Endothelial cell of umbilical vein (primary cell): ENCODE measurements at regions of chr12 and their contacts with region 1.

Region 1: DNA sequence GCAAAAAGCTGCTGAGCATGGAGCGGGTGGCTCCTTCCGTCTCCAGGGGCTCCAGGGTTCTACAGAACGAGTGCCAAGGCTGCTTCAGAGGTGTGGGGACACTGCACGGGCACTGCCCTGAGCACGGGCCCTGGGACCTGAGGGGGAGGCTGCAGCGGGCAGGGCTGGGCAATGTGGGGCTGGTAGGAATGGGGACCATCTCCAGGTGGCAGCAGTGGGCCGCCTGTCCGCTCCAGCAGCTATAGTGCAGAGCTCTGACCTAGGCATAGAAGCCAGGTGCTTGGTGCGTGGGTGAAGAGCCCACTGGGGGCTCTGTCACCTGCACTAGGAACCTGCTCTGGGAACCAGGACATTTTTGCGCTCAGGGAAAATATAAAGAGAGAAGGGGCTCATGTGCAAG is 22.3 kb downstream of the HDAC7 start:
- DNase-seq: no peak
- H3K4me3 ChIP-seq: no peak overlapping the region
- H3K27ac ChIP-seq: no peak overlapping the region
- H3K4me1 ChIP-seq: peaks cover 23% of the 10 kb centered on the region
- H3K27me3 ChIP-seq: no peaks in the 10 kb centered on the region
- CTCF ChIP-seq: peak; percentile 6 to 45
- POLR2A ChIP-seq: no peak

Region 2: GRCh38 chr12:47812797-47813510 is 15.5 kb after region 1 on chr12:
- CTCF ChIA-PET with region 1: interaction called, 35 read pairs
- POLR2A ChIA-PET with region 1: interaction called, 9 read pairs
- dilution Hi-C with region 1: no loop called
- intact Hi-C with region 1: loop called (anchors 1 kb)
- DNase-seq: peak; percentile 87
- H3K4me3 ChIP-seq: peak overlapping the region in 2 of 3 experiments; percentile 11 to 16
- H3K27ac ChIP-seq: peak overlapping the region; percentile 93
- H3K4me1 ChIP-seq: peaks cover 92% of the 10 kb centered on the region
- H3K27me3 ChIP-seq: no peaks in the 10 kb centered on the region
- CTCF ChIP-seq: no peak
- POLR2A ChIP-seq: no peak

Region 3: DNA sequence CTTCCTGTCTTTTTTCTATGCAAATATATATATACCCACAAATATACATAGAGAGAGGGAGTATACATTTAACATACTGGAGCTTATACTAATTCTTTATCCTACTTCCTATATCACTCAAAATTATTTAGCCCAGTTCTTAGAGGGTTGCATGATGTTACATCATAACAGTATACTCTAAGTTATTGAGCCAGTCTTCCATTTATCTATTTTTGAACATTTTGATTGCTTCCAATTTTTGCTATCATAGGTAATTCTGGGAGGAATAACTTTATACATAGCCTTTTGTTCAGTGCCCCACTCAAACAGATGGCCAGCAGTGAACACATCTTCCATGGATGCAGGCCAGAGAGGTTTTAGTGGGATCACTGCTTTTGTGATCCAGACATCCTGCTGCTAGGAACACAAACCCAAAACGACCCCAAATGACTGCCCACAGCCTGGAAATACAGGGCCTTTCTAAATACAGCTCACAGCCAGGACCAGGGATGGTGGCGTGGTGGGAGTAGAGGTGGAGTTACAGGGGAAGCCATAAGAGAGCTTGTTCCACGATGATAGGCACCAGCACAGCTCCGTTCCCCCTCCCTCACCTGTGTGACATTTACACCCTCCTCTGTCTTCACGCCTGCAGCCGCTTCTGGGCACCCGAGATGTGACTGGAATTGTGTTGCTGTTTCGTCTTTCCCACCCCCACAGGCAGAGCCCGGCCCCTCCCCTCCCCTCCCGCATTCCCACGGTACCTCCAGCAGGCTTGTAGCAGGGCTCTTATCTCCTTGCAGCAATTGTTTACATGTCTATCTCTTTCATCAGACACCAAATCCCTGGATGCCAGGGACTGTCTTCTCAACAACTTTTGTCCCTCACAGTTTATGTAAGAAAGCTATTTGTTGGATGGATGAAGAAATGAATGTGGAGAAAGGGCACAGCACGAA is 53.0 kb after region 1 on chr12:
- CTCF ChIA-PET with region 1: no interaction called
- POLR2A ChIA-PET with region 1: no interaction called
- dilution Hi-C with region 1: no loop called
- intact Hi-C with region 1: no loop called
- DNase-seq: no peak
- H3K4me3 ChIP-seq: no peak overlapping the region
- H3K27ac ChIP-seq: no peak overlapping the region
- H3K4me1 ChIP-seq: peaks cover 7% of the 10 kb centered on the region
- H3K27me3 ChIP-seq: no peaks in the 10 kb centered on the region
- CTCF ChIP-seq: no peak
- POLR2A ChIP-seq: no peak